ENCODE measurements at regions of chr15 and their contacts with region 1.

Region 1: DNA sequence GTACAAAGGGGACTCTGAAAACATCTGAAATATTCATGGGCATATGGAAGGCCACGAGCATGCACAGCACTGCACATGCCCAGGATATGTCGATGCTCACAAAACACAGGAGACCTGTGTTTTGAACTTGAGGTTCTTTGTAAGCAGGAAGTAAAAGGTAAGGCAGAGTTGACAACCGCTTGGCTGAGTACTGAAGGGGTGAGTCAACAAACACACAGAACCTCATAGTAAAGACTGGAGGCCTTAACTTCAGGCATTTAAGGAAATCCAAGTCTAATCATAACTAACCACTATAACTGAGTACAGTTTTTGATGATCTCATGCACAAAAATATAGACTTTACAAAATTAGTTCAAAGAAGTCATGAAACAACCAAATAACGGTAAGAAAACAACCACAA is 80.6 kb downstream of the MYO9A start:
- DNase-seq: no peak
- ATAC-seq: no peak
- H3K4me3 ChIP-seq: no peak overlapping the region
- H3K27ac ChIP-seq: no peak overlapping the region
- H3K4me1 ChIP-seq: no peaks in the 10 kb centered on the region
- H3K27me3 ChIP-seq: no peaks in the 10 kb centered on the region
- CTCF ChIP-seq: no peak

Region 2: DNA sequence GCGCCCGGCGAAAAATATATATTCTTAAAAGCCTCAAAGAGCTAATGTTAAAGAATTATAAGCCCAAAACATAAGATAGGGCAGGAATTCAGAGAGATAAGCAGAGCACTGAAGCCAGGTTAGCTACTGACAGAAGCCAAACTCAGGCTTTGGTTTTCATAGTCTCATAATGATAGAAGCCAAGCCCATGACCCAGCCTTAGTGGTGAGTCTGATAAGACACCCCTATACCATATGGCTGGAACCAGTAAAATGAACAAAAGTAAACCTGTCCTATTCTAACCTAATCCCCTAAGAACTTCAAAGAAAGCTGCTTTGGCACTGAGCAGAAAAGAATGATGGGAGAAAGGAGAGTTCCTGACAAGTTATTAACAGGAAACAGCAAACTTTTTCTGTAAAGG is 54.7 kb after region 1 on chr15:
- intact Hi-C with region 1: loop called in 1 of 3 experiments (anchors 5 kb)
- DNase-seq: no peak
- ATAC-seq: no peak
- H3K4me3 ChIP-seq: no peak overlapping the region
- H3K27ac ChIP-seq: no peak overlapping the region
- H3K4me1 ChIP-seq: no peaks in the 10 kb centered on the region
- H3K27me3 ChIP-seq: no peaks in the 10 kb centered on the region
- CTCF ChIP-seq: no peak

Measured in pancreas (tissue), 10 donors.